H1 (cell line): ENCODE measurements at regions of chr19 and their contacts with region 1.

Region 1: GRCh38 chr19:58519355-58520256 is at the start of gene ZBTB45:
- DNase-seq: peak; percentile 91 to 96
- H3K4me3 ChIP-seq: peak within 1 kb of the TSS; percentile 54 to 87 (median 70)
- H3K27ac ChIP-seq: peak within 1 kb of the TSS; percentile 91
- H3K4me1 ChIP-seq: peaks cover 0 to 29% (median 16%) of the 10 kb centered on the region in 4 experiments; a peak in 6 of 7 replicates
- H3K27me3 ChIP-seq: no peaks in the 10 kb centered on the region; a peak in 1 of 7 replicates
- CTCF ChIP-seq: peak; percentile 83 to 93 (median 86)
- EP300 ChIP-seq: no peak
- POLR2A ChIP-seq: peak; percentile 8 to 37; a peak in 2 of 3 replicates
- RAD21 ChIP-seq: peak; percentile 78 to 79
- total RNA-seq, gene ZBTB45: 16.9 and 17.3 TPM in 2 replicates

Region 2: GRCh38 chr19:58386576-58387337 is 132.8 kb before region 1 on chr19 and contains the start of gene RPS5:
- CTCF ChIA-PET with region 1: no interaction called
- POLR2A ChIA-PET with region 1: interaction called, 17 read pairs
- DNase-seq: peak; percentile 93 to 95
- H3K4me3 ChIP-seq: peak within 1 kb of the TSS; percentile 82 to 99 (median 92)
- H3K27ac ChIP-seq: peak within 1 kb of the TSS; percentile 94
- H3K4me1 ChIP-seq: peaks cover 0 to 15% (median 9%) of the 10 kb centered on the region in 4 experiments; a peak in 6 of 7 replicates
- H3K27me3 ChIP-seq: no peaks in the 10 kb centered on the region
- CTCF ChIP-seq: no peak
- EP300 ChIP-seq: no peak
- POLR2A ChIP-seq: peak; percentile 53 to 93
- RAD21 ChIP-seq: no peak; a peak in 1 of 4 replicates
- total RNA-seq, gene RPS5: 1,554 and 1,557 TPM in 2 replicates

Region 3: GRCh38 chr19:58428617-58429016 is 91.0 kb before region 1 on chr19:
- CTCF ChIA-PET with region 1: no interaction called
- POLR2A ChIA-PET with region 1: no interaction called
- DNase-seq: no peak
- H3K4me3 ChIP-seq: no peak overlapping the region
- H3K27ac ChIP-seq: no peak overlapping the region
- H3K4me1 ChIP-seq: no peaks in the 10 kb centered on the region
- H3K27me3 ChIP-seq: no peaks in the 10 kb centered on the region
- CTCF ChIP-seq: no peak
- EP300 ChIP-seq: no peak
- POLR2A ChIP-seq: no peak
- RAD21 ChIP-seq: no peak

Region 4: DNA sequence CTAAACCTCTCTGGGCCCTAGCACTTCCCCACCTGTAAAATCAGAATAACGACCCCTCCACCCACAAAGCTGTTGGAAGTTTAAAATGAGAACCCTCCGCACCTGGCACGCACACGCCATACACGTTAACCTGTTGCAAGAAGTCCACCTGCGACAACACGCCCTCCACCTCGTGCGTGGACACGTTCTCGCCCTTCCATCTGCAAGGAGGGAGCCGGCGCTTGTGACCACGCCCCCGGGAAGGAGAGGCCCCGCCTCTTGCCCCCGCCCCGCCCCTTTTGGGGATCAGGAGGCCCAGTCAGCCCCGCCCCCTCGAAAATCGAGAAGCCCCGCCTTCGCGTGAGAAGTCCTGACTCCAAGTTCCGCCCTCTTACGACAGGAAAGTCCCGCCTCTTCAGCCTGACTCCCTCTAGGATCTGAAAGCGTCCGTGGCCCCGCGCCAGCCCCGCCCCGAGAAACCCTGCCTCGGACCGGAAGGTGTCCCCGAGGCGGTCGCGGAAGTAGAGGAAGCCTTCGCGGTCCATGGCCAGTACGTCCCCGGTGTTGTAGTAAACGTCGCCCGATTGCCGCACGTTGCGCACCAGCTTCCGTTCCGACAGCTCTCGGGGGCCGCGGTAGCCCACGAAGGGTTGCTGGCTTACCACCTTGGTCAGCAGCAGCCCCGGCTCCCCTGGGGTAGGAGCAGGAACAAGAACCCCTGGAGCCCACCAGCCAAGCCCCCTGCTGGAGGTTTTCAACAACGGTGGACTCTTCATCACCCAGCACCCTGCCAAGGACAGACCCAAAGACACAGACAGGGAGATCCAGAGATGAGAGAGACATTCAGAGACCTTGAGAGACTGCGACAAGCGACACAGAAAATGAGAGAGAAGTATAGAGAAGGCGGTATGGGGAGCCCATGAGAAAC is 20.3 kb before region 1 on chr19:
- CTCF ChIA-PET with region 1: interaction called, 27 read pairs
- POLR2A ChIA-PET with region 1: interaction called, 14 read pairs
- DNase-seq: peak; percentile 96 to 99
- H3K4me3 ChIP-seq: peak overlapping the region; percentile 72 to 89 (median 76)
- H3K27ac ChIP-seq: peak overlapping the region; percentile 44; the same call in 1 of the 2 replicates
- H3K4me1 ChIP-seq: peaks cover 0 to 14% (median 7%) of the 10 kb centered on the region in 4 experiments; a peak in 4 of 7 replicates
- H3K27me3 ChIP-seq: no peaks in the 10 kb centered on the region
- CTCF ChIP-seq: no peak
- EP300 ChIP-seq: peak; percentile 17 to 41; a peak in 2 of 3 replicates
- POLR2A ChIP-seq: no peak
- RAD21 ChIP-seq: peak in 1 of 2 experiments; percentile 4; a peak in 1 of 4 replicates

Region 5: GRCh38 chr19:58538257-58539168 is 18.9 kb after region 1 on chr19:
- CTCF ChIA-PET with region 1: interaction called, 21 read pairs
- POLR2A ChIA-PET with region 1: interaction called, 650 read pairs
- DNase-seq: peak in 1 of 2 experiments; percentile 88
- H3K4me3 ChIP-seq: peak overlapping the region; percentile 17 to 52 (median 32)
- H3K27ac ChIP-seq: peak overlapping the region; percentile 85
- H3K4me1 ChIP-seq: peaks cover 0 to 5% (median 4%) of the 10 kb centered on the region in 4 experiments; a peak in 5 of 7 replicates
- H3K27me3 ChIP-seq: peaks cover 0 to 24% (median 10%) of the 10 kb centered on the region in 4 experiments; a peak in 5 of 7 replicates
- CTCF ChIP-seq: no peak
- EP300 ChIP-seq: no peak
- POLR2A ChIP-seq: peak; percentile 78 to 89
- RAD21 ChIP-seq: no peak

Region 6: GRCh38 chr19:58551577-58552471 is 32.2 kb after region 1 on chr19:
- CTCF ChIA-PET with region 1: interaction called, 35 read pairs
- POLR2A ChIA-PET with region 1: interaction called, 650 read pairs
- DNase-seq: no peak
- H3K4me3 ChIP-seq: no peak overlapping the region
- H3K27ac ChIP-seq: no peak overlapping the region
- H3K4me1 ChIP-seq: peaks cover 0 to 15% (median 9%) of the 10 kb centered on the region in 4 experiments; a peak in 6 of 7 replicates
- H3K27me3 ChIP-seq: no peaks in the 10 kb centered on the region
- CTCF ChIP-seq: no peak
- EP300 ChIP-seq: no peak
- POLR2A ChIP-seq: peak; percentile 32 to 87
- RAD21 ChIP-seq: no peak

Region 7: GRCh38 chr19:58572818-58573657 is 53.4 kb after region 1 on chr19 and contains the start of gene MZF1:
- CTCF ChIA-PET with region 1: interaction called, 18 read pairs
- POLR2A ChIA-PET with region 1: interaction called, 82 read pairs
- DNase-seq: peak; percentile 99 to 100
- H3K4me3 ChIP-seq: peak within 1 kb of the TSS; percentile 70 to 87 (median 78)
- H3K27ac ChIP-seq: peak within 1 kb of the TSS; percentile 98
- H3K4me1 ChIP-seq: peaks cover 0 to 11% (median 1%) of the 10 kb centered on the region in 4 experiments; a peak in 3 of 7 replicates
- H3K27me3 ChIP-seq: no peaks in the 10 kb centered on the region
- CTCF ChIP-seq: peak in 2 of 3 experiments; percentile 16 to 17; a peak in 2 of 4 replicates
- EP300 ChIP-seq: no peak
- POLR2A ChIP-seq: peak; percentile 2 to 77
- RAD21 ChIP-seq: no peak
- total RNA-seq, gene MZF1: 15.2 and 15.5 TPM in 2 replicates